Naive thymus-derived CD4-positive, alpha-beta T cell (primary cell): ENCODE measurements at regions of chr3 and their contacts with region 1.

Region 1: GRCh38 chr3:125310623-125311081 is 64.5 kb downstream of the ZNF148 start:
- DNase-seq: peak; percentile 15 to 51 (median 41)
- ATAC-seq: peak; percentile 92
- H3K4me3 ChIP-seq: peak overlapping the region; percentile 52
- H3K4me3 Mint-ChIP-seq: peak overlapping the region; percentile 78 to 99 (median 94)
- H3K27ac ChIP-seq: peak overlapping the region; percentile 62
- H3K27ac Mint-ChIP-seq: peak overlapping the region; percentile 40 to 97 (median 90)
- H3K4me1 ChIP-seq: peaks cover 0 to 17% of the 10 kb centered on the region in 2 donors
- H3K4me1 Mint-ChIP-seq: peaks cover 28 to 82% (median 65%) of the 10 kb centered on the region in 7 donors
- H3K27me3 ChIP-seq: no peaks in the 10 kb centered on the region
- H3K27me3 Mint-ChIP-seq: no peaks in the 10 kb centered on the region

Region 2: DNA sequence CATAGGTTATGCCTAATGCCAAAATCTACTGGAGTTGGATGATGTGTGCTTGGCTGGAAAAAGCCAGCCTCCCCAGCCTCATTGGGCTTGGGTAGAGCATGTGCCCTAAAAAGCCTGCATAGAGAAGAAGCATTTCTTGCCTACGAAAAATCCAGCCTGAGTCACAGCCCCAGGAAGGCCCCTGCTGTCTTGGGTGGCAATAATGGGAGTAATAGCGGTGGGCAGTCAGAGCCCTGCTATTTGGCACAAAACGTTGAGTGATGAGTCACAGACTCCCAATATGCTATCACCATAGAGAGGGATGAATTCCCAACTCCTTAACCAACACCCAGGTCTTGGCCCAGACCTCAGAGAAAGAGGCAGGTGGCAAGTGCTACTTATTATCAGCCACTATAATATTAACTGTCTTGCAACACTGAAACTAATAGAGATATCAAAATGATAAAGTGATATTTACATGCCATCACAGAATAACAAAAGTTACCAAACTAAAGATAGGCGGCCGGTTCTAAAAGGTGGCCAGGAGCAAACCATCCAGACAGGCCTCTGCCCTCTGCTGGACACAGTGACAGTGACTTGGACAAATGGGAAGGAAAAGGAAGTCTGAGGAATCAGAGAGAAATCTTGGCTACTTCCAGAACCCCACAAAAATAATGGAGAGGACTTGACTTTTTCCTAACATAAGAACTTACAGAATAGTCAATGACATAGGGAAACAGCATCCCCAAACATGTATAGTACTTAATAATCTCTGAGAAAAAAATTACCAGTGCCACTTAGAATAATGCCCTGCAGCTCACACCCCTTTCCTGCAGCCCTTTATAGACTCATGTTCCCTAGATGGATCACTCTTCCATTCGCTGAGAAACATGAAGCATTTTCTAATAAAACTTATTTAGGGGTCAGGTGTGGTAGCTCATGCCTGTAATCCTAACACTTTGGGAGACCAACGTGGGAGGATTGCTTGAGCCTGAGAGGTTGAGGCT is 324.2 kb before region 1 on chr3:
- CTCF ChIA-PET with region 1: no interaction called
- POLR2A ChIA-PET with region 1: no interaction called
- intact Hi-C with region 1: no loop called
- DNase-seq: no peak
- ATAC-seq: no peak
- H3K4me3 ChIP-seq: no peak overlapping the region
- H3K4me3 Mint-ChIP-seq: no peak overlapping the region
- H3K27ac ChIP-seq: no peak overlapping the region
- H3K27ac Mint-ChIP-seq: peak overlapping the region in 2 of 9 donors; percentile 29 to 76
- H3K4me1 ChIP-seq: no peaks in the 10 kb centered on the region
- H3K4me1 Mint-ChIP-seq: peaks cover 0 to 12% (median 0%) of the 10 kb centered on the region in 7 donors
- H3K27me3 ChIP-seq: no peaks in the 10 kb centered on the region
- H3K27me3 Mint-ChIP-seq: no peaks in the 10 kb centered on the region

Region 3: GRCh38 chr3:125300416-125300815 is 10.2 kb before region 1 on chr3:
- CTCF ChIA-PET with region 1: no interaction called
- POLR2A ChIA-PET with region 1: no interaction called
- intact Hi-C with region 1: loop called in 1 of 2 experiments (anchors 2 kb)
- DNase-seq: no peak
- ATAC-seq: no peak
- H3K4me3 ChIP-seq: no peak overlapping the region
- H3K4me3 Mint-ChIP-seq: no peak overlapping the region
- H3K27ac ChIP-seq: no peak overlapping the region
- H3K27ac Mint-ChIP-seq: no peak overlapping the region
- H3K4me1 ChIP-seq: peaks cover 0 to 5% of the 10 kb centered on the region in 2 donors
- H3K4me1 Mint-ChIP-seq: peaks cover 4 to 63% (median 54%) of the 10 kb centered on the region in 7 donors
- H3K27me3 ChIP-seq: no peaks in the 10 kb centered on the region
- H3K27me3 Mint-ChIP-seq: no peaks in the 10 kb centered on the region

Region 4: DNA sequence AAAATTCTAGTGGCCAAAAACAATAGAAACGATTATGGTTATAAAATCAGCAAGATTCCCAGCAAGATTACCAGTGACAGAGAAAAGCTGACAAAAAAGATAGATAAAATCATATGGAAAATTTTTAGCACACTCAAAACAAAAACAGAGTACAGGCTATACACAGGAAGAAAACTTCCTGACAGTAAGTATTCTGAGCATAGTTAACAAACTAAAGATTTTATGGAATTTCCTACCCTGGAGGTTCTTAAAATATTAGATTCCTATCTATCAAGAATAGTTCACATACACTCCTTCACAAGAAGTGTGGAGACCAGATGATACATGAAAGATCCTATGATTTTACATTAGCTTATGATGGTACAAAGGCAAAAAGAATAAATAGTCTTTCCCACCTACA is 13.7 kb after region 1 on chr3:
- CTCF ChIA-PET with region 1: no interaction called
- POLR2A ChIA-PET with region 1: no interaction called
- intact Hi-C with region 1: loop called in 1 of 2 experiments (anchors 2 kb)
- DNase-seq: no peak
- ATAC-seq: no peak
- H3K4me3 ChIP-seq: no peak overlapping the region
- H3K4me3 Mint-ChIP-seq: no peak overlapping the region
- H3K27ac ChIP-seq: no peak overlapping the region
- H3K27ac Mint-ChIP-seq: peak overlapping the region in 1 of 9 donors; percentile 45
- H3K4me1 ChIP-seq: no peaks in the 10 kb centered on the region
- H3K4me1 Mint-ChIP-seq: peaks cover 4 to 15% (median 8%) of the 10 kb centered on the region in 7 donors
- H3K27me3 ChIP-seq: no peaks in the 10 kb centered on the region
- H3K27me3 Mint-ChIP-seq: no peaks in the 10 kb centered on the region

Region 5: DNA sequence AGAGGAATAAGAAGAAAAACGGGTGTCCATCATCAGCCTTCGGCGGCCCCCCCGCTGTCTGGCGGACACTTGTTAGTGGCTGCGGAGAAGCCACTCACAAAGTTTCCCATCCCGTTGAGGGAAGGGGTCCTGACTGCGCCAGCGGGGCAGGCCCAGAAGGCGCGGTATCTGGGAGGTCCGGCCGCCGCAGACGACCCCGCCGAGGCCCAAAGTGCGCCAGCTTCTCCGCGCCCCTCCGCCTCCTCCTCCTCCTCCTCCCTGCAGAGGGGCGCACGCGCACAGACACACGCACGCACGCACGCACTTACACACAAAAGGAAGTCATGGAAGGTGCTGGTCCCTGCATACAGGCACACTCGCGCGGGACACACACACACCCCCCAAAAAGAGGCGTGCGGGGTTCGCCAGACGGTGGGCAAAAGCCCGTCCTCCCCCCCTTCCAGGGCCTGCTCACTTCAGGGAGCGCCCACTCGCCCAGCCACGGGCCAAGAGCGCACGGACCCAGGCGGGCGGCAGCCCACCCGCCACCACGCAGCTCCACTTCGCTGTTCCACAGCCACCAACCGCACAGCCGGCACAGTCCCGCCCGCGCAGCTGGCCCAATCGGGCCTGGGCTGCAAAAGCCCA is 46.5 kb after region 1 on chr3:
- CTCF ChIA-PET with region 1: no interaction called
- POLR2A ChIA-PET with region 1: no interaction called
- intact Hi-C with region 1: loop called in 1 of 2 experiments (anchors 1 kb)
- DNase-seq: peak; percentile 51 to 84 (median 75)
- ATAC-seq: peak; percentile 97
- H3K4me3 ChIP-seq: peak overlapping the region; percentile 65
- H3K4me3 Mint-ChIP-seq: peak overlapping the region; percentile 81 to 98 (median 90)
- H3K27ac ChIP-seq: peak overlapping the region; percentile 89
- H3K27ac Mint-ChIP-seq: peak overlapping the region; percentile 20 to 96 (median 92)
- H3K4me1 ChIP-seq: peaks cover 0 to 6% of the 10 kb centered on the region in 2 donors
- H3K4me1 Mint-ChIP-seq: peaks cover 51 to 93% (median 76%) of the 10 kb centered on the region in 7 donors
- H3K27me3 ChIP-seq: no peaks in the 10 kb centered on the region
- H3K27me3 Mint-ChIP-seq: no peaks in the 10 kb centered on the region

Region 6: GRCh38 chr3:126113733-126114442 is 803.2 kb after region 1 on chr3:
- CTCF ChIA-PET with region 1: no interaction called
- POLR2A ChIA-PET with region 1: no interaction called
- intact Hi-C with region 1: no loop called
- DNase-seq: no peak
- ATAC-seq: no peak
- H3K4me3 ChIP-seq: no peak overlapping the region
- H3K4me3 Mint-ChIP-seq: no peak overlapping the region
- H3K27ac ChIP-seq: no peak overlapping the region
- H3K27ac Mint-ChIP-seq: peak overlapping the region in 1 of 9 donors; percentile 55
- H3K4me1 ChIP-seq: no peaks in the 10 kb centered on the region
- H3K4me1 Mint-ChIP-seq: no peaks in the 10 kb centered on the region
- H3K27me3 ChIP-seq: no peaks in the 10 kb centered on the region
- H3K27me3 Mint-ChIP-seq: peaks cover 0 to 2% (median 1%) of the 10 kb centered on the region in 5 donors